H1 (cell line): ENCODE measurements at regions of chr7 and their contacts with region 1.

Region 1: GRCh38 chr7:3399858-3400257 is 98.8 kb downstream of the SDK1 start:
- DNase-seq: peak; percentile 69 to 85
- H3K4me3 ChIP-seq: no peak overlapping the region
- H3K27ac ChIP-seq: no peak overlapping the region
- H3K4me1 ChIP-seq: peaks cover 0 to 3% (median 1%) of the 10 kb centered on the region in 4 experiments; a peak in 4 of 7 replicates
- H3K27me3 ChIP-seq: no peaks in the 10 kb centered on the region
- CTCF ChIP-seq: peak; percentile 58 to 98 (median 95)
- EP300 ChIP-seq: peak in 1 of 2 experiments; percentile 64; a peak in 1 of 3 replicates
- POLR2A ChIP-seq: no peak
- RAD21 ChIP-seq: peak; percentile 71 to 83

Region 2: DNA sequence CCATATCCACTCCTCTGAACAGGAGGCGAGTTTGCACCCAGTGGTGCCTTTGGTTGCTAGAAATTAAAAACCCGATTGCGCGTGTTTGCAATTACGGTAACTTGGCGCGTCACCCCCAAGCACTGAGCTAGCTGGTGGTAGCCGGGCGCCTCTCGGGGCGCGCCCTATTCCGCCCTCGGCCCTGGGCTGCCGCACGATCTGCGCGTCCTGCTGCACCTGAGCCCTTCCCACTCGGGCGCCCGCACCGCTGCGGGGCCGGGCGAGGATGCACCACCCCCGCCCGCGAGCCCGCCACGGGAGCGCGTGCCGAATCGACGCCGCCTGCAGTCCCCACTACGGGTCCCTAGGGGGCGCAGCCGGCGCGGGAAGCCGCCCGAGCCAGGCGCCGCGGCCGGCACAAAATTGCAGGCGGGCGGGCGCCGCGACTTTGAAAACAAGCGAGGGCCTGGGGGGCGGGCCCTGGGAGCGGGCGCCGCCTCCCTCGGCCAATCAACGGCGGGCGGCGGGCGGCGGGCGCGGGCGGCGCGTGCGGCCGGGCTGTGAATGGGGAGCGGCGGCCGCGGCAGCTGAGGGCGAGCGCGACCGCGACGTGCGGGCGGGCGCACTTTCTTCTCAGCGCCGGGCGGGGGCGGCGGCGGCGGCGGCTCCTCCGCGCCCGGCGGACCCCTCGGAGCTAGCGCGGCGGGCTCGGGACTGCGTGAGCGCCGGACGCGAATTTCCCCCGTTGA is 99.0 kb before region 1 on chr7 and contains the start of gene SDK1:
- CTCF ChIA-PET with region 1: interaction called, 10 read pairs
- POLR2A ChIA-PET with region 1: no interaction called
- DNase-seq: peak; percentile 47 to 94
- H3K4me3 ChIP-seq: peak within 1 kb of the TSS; percentile 64 to 85 (median 72)
- H3K27ac ChIP-seq: no peak within 1 kb of the TSS
- H3K4me1 ChIP-seq: peaks cover 2 to 8% (median 5%) of the 10 kb centered on the region in 4 experiments; a peak in 6 of 7 replicates
- H3K27me3 ChIP-seq: peaks cover 0 to 9% (median 0%) of the 10 kb centered on the region in 4 experiments; a peak in 3 of 7 replicates
- CTCF ChIP-seq: peak; percentile 67 to 89 (median 74)
- EP300 ChIP-seq: peak in 1 of 2 experiments; percentile 51; a peak in 1 of 3 replicates
- POLR2A ChIP-seq: no peak
- RAD21 ChIP-seq: peak; percentile 71 to 85
- total RNA-seq, gene SDK1: 7.2 and 7.3 TPM in 2 replicates

Region 3: GRCh38 chr7:3415861-3416312 is 16.0 kb after region 1 on chr7:
- CTCF ChIA-PET with region 1: interaction called, 13 read pairs
- POLR2A ChIA-PET with region 1: no interaction called
- DNase-seq: no peak
- H3K4me3 ChIP-seq: no peak overlapping the region
- H3K27ac ChIP-seq: no peak overlapping the region
- H3K4me1 ChIP-seq: peaks cover 0 to 3% (median 0%) of the 10 kb centered on the region in 4 experiments; a peak in 1 of 7 replicates
- H3K27me3 ChIP-seq: no peaks in the 10 kb centered on the region
- CTCF ChIP-seq: no peak
- EP300 ChIP-seq: no peak
- POLR2A ChIP-seq: no peak
- RAD21 ChIP-seq: no peak